ENCODE measurements at regions of chr6 and their contacts with region 1.

Region 1: DNA sequence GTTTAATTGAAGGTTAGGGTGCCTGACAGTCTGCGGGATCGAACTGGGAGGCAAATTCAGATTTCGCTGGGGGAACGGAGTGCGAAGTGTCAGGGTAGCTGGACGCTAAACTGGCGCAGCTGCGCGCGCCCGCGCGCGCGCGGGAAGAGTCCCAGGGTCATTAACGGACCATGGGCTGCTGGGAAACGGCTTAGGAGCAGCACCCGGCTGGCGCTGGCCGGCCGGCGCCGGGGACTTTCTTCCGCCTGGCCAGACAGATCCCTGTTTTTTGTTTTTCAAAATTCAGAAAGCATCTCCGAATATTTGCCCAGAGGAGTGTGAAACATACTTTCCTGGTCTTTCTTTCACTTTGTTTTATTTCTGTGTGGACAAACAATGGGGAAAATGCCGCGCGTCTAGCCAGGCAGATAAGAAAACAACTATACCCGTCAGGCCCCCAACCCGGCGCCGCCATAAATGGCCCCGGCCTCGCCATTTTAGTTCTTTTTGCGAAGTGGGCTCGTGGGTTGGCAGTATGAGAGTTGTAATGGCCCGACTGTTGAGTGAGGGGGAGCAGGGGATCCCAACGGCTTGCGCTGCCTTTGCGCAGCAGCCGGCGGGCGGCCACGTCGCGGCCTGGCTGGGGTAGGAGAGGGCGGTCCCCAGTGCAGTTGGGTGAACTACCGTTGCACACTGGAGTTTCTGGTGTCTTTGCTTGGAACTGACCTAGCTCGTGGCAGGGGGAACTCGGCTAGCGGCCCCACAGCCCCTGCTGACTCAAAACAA is 7.1 kb downstream of the HSPA1B start:
- DNase-seq: peak; percentile 85
- H3K4me3 Mint-ChIP-seq: peak overlapping the region; percentile 97
- H3K27ac Mint-ChIP-seq: peak overlapping the region; percentile 97
- H3K4me1 Mint-ChIP-seq: peaks cover 40% of the 10 kb centered on the region
- H3K27me3 Mint-ChIP-seq: no peaks in the 10 kb centered on the region

Region 2: DNA sequence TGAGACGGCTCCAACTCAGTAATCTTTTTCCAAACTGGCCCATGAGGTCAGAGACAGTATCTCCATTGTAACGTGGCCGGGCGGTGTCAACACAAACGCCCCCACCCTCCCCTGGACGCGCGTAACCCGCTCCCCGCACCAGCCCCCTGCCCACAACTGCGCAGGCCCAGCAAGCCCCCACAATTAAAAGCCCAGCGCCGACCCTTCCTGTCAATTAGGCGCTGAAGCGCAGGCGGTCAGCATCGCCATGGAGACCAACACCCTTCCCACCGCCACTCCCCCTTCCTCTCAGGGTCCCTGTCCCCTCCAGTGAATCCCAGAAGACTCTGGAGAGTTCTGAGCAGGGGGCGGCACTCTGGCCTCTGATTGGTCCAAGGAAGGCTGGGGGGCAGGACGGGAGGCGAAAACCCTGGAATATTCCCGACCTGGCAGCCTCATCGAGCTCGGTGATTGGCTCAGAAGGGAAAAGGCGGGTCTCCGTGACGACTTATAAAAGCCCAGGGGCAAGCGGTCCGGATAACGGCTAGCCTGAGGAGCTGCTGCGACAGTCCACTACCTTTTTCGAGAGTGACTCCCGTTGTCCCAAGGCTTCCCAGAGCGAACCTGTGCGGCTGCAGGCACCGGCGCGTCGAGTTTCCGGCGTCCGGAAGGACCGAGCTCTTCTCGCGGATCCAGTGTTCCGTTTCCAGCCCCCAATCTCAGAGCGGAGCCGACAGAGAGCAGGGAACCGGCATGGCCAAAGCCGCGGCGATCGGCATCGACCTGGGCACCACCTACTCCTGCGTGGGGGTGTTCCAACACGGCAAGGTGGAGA is 19.4 kb before region 1 on chr6 and contains the starts of genes HSPA1A and HSPA1L:
- CTCF ChIA-PET with region 1: interaction called, 8 read pairs
- POLR2A ChIA-PET with region 1: interaction called, 3 read pairs
- intact Hi-C with region 1: loop called (anchors 2 kb)
- DNase-seq: peak; percentile 82
- H3K4me3 Mint-ChIP-seq: peak within 1 kb of the TSS; percentile 85
- H3K27ac Mint-ChIP-seq: peak within 1 kb of the TSS; percentile 95
- H3K4me1 Mint-ChIP-seq: peaks cover 57% of the 10 kb centered on the region
- H3K27me3 Mint-ChIP-seq: no peaks in the 10 kb centered on the region
- total RNA-seq, gene HSPA1A: 68.5 to 69.9 TPM
- total RNA-seq, gene HSPA1L: 2.0 TPM

Region 3: GRCh38 chr6:31897612-31898382 is 63.2 kb after region 1 on chr6 and contains the start of gene EHMT2:
- CTCF ChIA-PET with region 1: interaction called, 5 read pairs
- POLR2A ChIA-PET with region 1: interaction called, 3 read pairs
- intact Hi-C with region 1: loop called (anchors 5 kb)
- DNase-seq: peak; percentile 91
- H3K4me3 Mint-ChIP-seq: peak within 1 kb of the TSS; percentile 94
- H3K27ac Mint-ChIP-seq: peak within 1 kb of the TSS; percentile 94
- H3K4me1 Mint-ChIP-seq: peaks cover 34% of the 10 kb centered on the region
- H3K27me3 Mint-ChIP-seq: no peaks in the 10 kb centered on the region
- total RNA-seq, gene EHMT2: 45.5 to 46.0 TPM

Region 4: GRCh38 chr6:32472781-32473375 is 638.3 kb after region 1 on chr6:
- CTCF ChIA-PET with region 1: no interaction called
- POLR2A ChIA-PET with region 1: no interaction called
- intact Hi-C with region 1: no loop called
- DNase-seq: no peak
- H3K4me3 Mint-ChIP-seq: no peak overlapping the region
- H3K27ac Mint-ChIP-seq: no peak overlapping the region
- H3K4me1 Mint-ChIP-seq: no peaks in the 10 kb centered on the region
- H3K27me3 Mint-ChIP-seq: peaks cover 36% of the 10 kb centered on the region